A549 (cell line): ENCODE measurements at regions of chr15 and their contacts with region 1.

Region 1: DNA sequence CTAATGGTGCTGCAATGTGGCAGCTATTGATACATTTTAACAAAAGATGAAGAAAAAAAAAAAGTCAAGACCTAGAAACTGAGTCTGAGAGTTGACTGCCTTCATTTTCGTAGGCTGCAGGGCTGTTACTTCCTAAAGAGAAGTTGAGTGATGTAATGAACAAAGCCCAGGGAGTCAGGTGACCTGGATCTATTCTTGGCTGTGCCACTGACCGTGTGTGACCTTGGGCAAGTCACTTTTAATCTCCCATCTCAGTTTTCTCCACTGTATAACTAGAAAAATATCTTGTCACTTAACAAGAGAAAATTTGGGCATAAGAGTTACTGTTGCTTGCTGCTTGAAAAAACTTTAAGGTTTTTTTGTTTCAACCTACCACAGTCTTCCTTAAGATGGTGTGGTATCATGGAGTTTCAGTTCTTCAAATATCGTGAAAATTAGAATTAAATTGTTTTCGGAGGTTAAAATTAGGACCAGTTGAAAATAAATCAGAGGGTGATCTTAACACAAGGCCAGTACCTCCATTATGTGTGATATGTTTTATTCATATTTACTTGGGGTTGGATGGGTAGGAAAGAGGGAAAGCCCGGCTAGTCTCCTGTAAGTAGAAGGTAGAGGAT is 5.8 kb downstream of the FMN1 start:
- DNase-seq: no peak
- ATAC-seq: no peak
- H3K4me3 ChIP-seq: no peak overlapping the region
- H3K27ac ChIP-seq: no peak overlapping the region
- H3K4me1 ChIP-seq: no peaks in the 10 kb centered on the region
- CTCF ChIP-seq: no peak
- EP300 ChIP-seq: no peak
- POLR2A ChIP-seq: no peak
- RAD21 ChIP-seq: no peak

Region 2: GRCh38 chr15:33074942-33075341 is 113.8 kb before region 1 on chr15:
- CTCF ChIA-PET with region 1: no interaction called
- POLR2A ChIA-PET with region 1: no interaction called
- DNase-seq: no peak
- ATAC-seq: peak in 1 of 2 experiments; percentile 60; a peak in 3 of 6 replicates
- H3K4me3 ChIP-seq: no peak overlapping the region
- H3K27ac ChIP-seq: no peak overlapping the region
- H3K4me1 ChIP-seq: no peaks in the 10 kb centered on the region
- CTCF ChIP-seq: no peak
- EP300 ChIP-seq: no peak
- POLR2A ChIP-seq: no peak
- RAD21 ChIP-seq: no peak

Region 3: GRCh38 chr15:33201491-33202231 is 12.9 kb after region 1 on chr15:
- CTCF ChIA-PET with region 1: interaction called, 21 read pairs
- POLR2A ChIA-PET with region 1: no interaction called
- DNase-seq: peak; percentile 91 to 96
- ATAC-seq: peak; percentile 96
- H3K4me3 ChIP-seq: peak overlapping the region; percentile 26
- H3K27ac ChIP-seq: peak overlapping the region; percentile 76
- H3K4me1 ChIP-seq: peaks cover 31% of the 10 kb centered on the region
- CTCF ChIP-seq: peak; percentile 51
- EP300 ChIP-seq: 0 out of 5 replicates have a peak, but pooled peaks of 1 of the 2 experiments have one; percentile 12
- POLR2A ChIP-seq: no peak
- RAD21 ChIP-seq: peak; percentile 8 to 38; a peak in 2 of 5 replicates